Heart right ventricle (tissue), 16 donors: ENCODE measurements at regions of chr4 and their contacts with region 1.

Region 1: GRCh38 chr4:128574706-128575105 is 234.8 kb upstream of the JADE1 start:
- DNase-seq: peak; percentile 22 to 60
- ATAC-seq: peak in 7 of 8 donors; percentile 30 to 66 (median 47)
- H3K4me3 ChIP-seq: no peak overlapping the region
- H3K27ac ChIP-seq: no peak overlapping the region
- H3K4me1 ChIP-seq: peaks cover 0 to 43% (median 28%) of the 10 kb centered on the region in 9 donors
- H3K27me3 ChIP-seq: no peaks in the 10 kb centered on the region
- CTCF ChIP-seq: peak; percentile 24 to 66 (median 52)

Region 2: DNA sequence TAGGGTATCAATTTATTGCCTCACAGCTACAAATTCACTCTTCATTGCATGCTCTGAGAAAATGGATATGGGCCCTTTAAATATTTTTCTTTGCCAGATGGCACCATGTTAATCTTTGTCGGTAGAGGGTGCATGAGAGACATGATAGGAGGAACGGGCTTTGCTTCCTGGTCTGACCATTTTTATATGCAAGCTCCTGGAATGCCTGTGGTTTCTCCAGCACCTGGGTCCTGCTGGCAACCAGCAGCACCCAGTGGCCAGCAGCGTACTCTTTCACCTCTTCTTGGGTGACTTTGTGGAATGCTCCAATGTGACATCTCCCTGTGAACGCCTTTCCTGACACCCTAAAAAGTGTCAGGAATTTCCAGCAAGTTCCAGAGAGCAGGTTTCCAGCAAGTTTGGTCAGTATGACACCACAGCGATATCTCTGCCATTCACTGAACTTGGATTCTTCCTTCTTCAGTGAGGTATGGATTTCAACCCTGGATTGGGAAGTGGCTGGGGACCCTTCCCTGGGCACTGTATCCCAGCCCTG is 146.8 kb before region 1 on chr4:
- intact Hi-C with region 1: no loop called
- DNase-seq: peak in 1 of 2 donors; percentile 21
- ATAC-seq: peak; percentile 52 to 91 (median 85)
- H3K4me3 ChIP-seq: peak overlapping the region in 3 of 10 donors; percentile 5 to 45 (median 32)
- H3K27ac ChIP-seq: peak overlapping the region in 5 of 10 donors; percentile 20 to 65 (median 39)
- H3K4me1 ChIP-seq: peaks cover 0 to 21% (median 5%) of the 10 kb centered on the region in 9 donors
- H3K27me3 ChIP-seq: no peaks in the 10 kb centered on the region
- CTCF ChIP-seq: peak in 8 of 9 donors; percentile 6 to 59 (median 46)

Region 3: GRCh38 chr4:128653517-128654444 is 79.1 kb after region 1 on chr4:
- intact Hi-C with region 1: loop called in 2 of 10 experiments (anchors 5 kb)
- DNase-seq: peak; percentile 46 to 47
- ATAC-seq: peak; percentile 84 to 95 (median 92)
- H3K4me3 ChIP-seq: no peak overlapping the region
- H3K27ac ChIP-seq: peak overlapping the region; percentile 13 to 63 (median 48)
- H3K4me1 ChIP-seq: peaks cover 0 to 49% (median 16%) of the 10 kb centered on the region in 9 donors
- H3K27me3 ChIP-seq: no peaks in the 10 kb centered on the region
- CTCF ChIP-seq: no peak

Region 4: GRCh38 chr4:128958202-128958601 is 383.5 kb after region 1 on chr4:
- intact Hi-C with region 1: no loop called
- DNase-seq: peak in 1 of 2 donors; percentile 3
- ATAC-seq: peak in 1 of 8 donors; percentile 49
- H3K4me3 ChIP-seq: no peak overlapping the region
- H3K27ac ChIP-seq: peak overlapping the region in 2 of 10 donors; percentile 11
- H3K4me1 ChIP-seq: no peaks in the 10 kb centered on the region
- H3K27me3 ChIP-seq: no peaks in the 10 kb centered on the region
- CTCF ChIP-seq: no peak